Activated T-helper 2 cell treated with anti-CD3 and anti-CD28 coated beads, Interferon-gamma antibody, Interleukin-2, Interleukin-4, amounts not matched to agents 10 μg/mL and 5 μg/mL and 100 μg/mL, durations not matched to agents 14 hours and 24 hours and 36 hours (primary cell): ENCODE measurements at regions of chr17 and their contacts with region 1.

Region 1: GRCh38 chr17:61279476-61280143 is 120.0 kb upstream of the TBX2 start:
- DNase-seq: no peak
- H3K4me3 Mint-ChIP-seq: no peak overlapping the region
- H3K27ac Mint-ChIP-seq: no peak overlapping the region
- H3K4me1 Mint-ChIP-seq: peaks cover 23% of the 10 kb centered on the region
- H3K27me3 Mint-ChIP-seq: no peaks in the 10 kb centered on the region

Region 2: DNA sequence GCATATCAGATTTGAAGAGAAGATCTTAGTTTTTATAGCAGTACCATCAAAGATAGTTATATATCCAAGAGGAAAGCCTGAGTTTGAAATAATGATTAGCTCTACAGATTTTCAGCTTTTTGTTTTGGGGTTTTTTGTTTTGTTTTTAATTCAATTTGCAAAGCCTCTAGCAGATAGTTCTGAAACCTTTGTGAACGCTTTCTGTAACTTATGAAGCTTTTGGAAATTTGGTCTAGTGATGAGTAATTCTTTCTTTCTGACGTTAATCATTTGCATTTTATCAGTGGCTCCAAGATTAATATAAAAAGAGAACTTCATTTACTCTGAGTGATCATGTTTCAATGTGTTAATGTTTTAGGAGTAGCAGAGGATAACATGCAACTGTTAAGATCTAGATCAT is 40.3 kb before region 1 on chr17:
- intact Hi-C with region 1: loop called (anchors 5 kb)
- DNase-seq: no peak
- H3K4me3 Mint-ChIP-seq: peak overlapping the region; percentile 45
- H3K27ac Mint-ChIP-seq: peak overlapping the region; percentile 43
- H3K4me1 Mint-ChIP-seq: peaks cover 20% of the 10 kb centered on the region
- H3K27me3 Mint-ChIP-seq: no peaks in the 10 kb centered on the region